BJ (cell line): ENCODE measurements at regions of chr4 and their contacts with region 1.

Region 1: DNA sequence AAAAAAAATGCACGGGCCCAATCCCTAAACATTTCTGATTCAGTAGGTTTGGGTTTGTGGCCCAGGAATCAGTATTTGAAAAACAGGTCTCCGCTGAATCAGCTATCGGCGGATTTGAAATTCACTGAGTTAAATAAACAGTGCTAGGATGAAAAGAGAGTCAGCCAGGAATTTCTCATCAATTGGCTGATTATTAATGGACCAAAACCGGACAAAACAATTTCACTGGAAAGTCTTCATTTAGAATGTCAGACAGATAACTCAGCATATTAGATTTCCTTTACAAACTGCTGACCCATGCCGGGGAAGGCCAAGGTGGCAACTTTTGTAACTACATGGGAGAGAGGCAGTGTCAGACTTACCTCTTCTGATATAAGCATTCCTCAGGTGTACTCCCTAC is 99.4 kb upstream of the LSM6 start:
- DNase-seq: no peak
- H3K4me3 ChIP-seq: no peak overlapping the region
- H3K27me3 ChIP-seq: no peaks in the 10 kb centered on the region; the same call in 1 of the 2 replicates
- CTCF ChIP-seq: no peak

Region 2: DNA sequence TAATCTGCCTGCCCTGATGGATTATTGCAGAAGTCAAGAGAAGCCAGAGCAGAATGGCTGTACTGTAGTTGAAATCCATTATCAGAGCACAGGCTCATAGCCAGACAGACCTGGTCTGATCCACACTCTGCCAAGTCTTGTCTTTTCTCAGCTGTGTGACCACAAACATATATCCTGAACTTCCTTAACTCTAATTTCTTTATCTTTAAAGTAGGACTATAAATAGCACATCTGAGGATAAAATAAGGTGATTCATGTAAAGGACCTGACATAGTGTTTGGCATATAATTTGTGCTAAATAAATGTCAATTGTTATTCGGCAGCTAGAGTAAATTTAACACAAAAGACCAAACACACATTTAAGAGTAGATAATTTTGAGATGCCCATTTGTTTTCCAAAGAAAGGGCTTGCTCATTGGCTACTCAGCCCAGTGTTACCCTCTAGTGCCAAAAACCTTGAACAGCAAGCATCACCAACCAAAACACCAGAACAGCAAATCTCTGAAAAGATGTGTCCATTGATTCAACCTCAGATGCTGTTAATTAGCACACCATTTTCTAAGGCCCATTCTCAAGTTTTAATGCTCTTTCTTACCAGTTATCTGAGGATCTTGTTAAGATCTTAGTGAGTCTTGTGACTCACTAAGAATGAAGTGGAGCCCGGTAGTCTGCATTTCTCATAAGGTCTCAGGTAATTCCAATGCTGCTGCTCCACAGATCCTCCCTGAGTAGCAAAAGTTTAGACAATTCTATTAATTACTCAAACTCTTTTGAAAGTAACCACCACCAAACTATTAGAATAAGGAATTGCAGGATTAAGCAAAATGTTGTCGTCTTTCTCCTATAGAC is 1321.3 kb before region 1 on chr4:
- CTCF ChIA-PET with region 1: no interaction called
- POLR2A ChIA-PET with region 1: no interaction called
- DNase-seq: no peak
- H3K4me3 ChIP-seq: no peak overlapping the region
- H3K27me3 ChIP-seq: no peaks in the 10 kb centered on the region
- CTCF ChIP-seq: peak; percentile 63

Region 3: GRCh38 chr4:146095091-146095690 is 19.1 kb after region 1 on chr4:
- CTCF ChIA-PET with region 1: interaction called, 40 read pairs
- POLR2A ChIA-PET with region 1: no interaction called
- DNase-seq: no peak
- H3K4me3 ChIP-seq: no peak overlapping the region
- H3K27me3 ChIP-seq: peaks cover 2% of the 10 kb centered on the region; the same call in 1 of the 2 replicates
- CTCF ChIP-seq: peak; percentile 76